CD8-positive, alpha-beta T cell (primary cell): ENCODE measurements at regions of chr3 and their contacts with region 1.

Region 1: GRCh38 chr3:187738331-187739093 is 6.8 kb downstream of the BCL6 start:
- DNase-seq: peak; percentile 38 to 88 (median 65)
- ATAC-seq: peak; percentile 32
- H3K4me3 ChIP-seq: peak overlapping the region; percentile 88 to 94
- H3K4me3 Mint-ChIP-seq: peak overlapping the region; percentile 94
- H3K27ac ChIP-seq: peak overlapping the region; percentile 44 to 88
- H3K27ac Mint-ChIP-seq: peak overlapping the region; percentile 100
- H3K4me1 ChIP-seq: peaks cover 15% of the 10 kb centered on the region
- H3K4me1 Mint-ChIP-seq: peaks cover 52% of the 10 kb centered on the region
- H3K27me3 ChIP-seq: no peaks in the 10 kb centered on the region
- H3K27me3 Mint-ChIP-seq: no peaks in the 10 kb centered on the region
- CTCF ChIP-seq: peak; percentile 85

Region 2: DNA sequence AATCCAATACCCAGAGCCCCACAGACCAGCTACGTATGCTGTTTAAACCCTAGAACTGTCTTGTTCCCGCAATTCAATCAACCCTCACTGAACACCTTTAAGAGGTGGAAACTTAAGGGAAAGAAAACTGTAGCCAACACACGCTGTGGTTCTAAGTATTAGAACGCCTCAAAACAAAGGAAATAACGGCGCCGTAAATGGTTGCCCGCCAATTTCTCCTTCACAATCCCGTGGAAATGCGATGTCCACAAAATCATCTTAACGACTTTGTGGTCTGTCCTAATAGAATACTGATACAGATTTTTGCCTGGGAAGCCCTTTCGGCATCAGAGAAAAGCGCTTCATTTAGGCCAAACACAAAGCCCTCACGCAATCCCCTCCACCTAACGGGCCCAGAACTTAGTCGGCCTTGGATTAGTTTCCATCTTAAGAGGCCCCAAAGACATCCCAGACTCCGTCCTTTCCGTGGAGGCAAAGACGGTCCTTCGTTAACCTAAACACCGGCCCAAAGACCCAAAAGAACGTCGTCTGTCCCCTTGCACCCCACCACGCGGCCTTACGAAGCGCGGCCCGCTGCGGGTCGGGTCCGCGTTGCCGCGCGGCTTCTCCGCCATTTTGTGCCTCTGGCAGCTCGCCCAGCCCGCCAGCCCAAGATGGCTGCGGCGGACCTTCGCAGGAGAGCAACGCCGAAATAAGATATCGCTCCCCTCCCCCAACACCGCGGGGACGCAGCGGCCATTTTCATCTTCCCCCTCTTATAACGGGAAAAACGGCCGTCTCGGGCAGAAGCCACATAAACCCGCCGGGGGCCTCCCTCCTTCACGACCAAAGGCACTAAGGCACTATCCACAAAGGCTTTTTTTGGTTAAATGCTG is 1801.5 kb before region 1 on chr3:
- CTCF ChIA-PET with region 1: no interaction called
- POLR2A ChIA-PET with region 1: no interaction called
- intact Hi-C with region 1: no loop called
- DNase-seq: peak; percentile 69 to 93 (median 87)
- ATAC-seq: peak; percentile 59
- H3K4me3 ChIP-seq: peak overlapping the region; percentile 93
- H3K4me3 Mint-ChIP-seq: peak overlapping the region; percentile 100
- H3K27ac ChIP-seq: peak overlapping the region; percentile 97 to 98
- H3K27ac Mint-ChIP-seq: peak overlapping the region; percentile 100
- H3K4me1 ChIP-seq: peaks cover 19% of the 10 kb centered on the region
- H3K4me1 Mint-ChIP-seq: peaks cover 45% of the 10 kb centered on the region
- H3K27me3 ChIP-seq: no peaks in the 10 kb centered on the region
- H3K27me3 Mint-ChIP-seq: no peaks in the 10 kb centered on the region
- CTCF ChIP-seq: no peak

Region 3: GRCh38 chr3:188154014-188154808 is 415.7 kb after region 1 on chr3 and contains the start of gene LPP:
- CTCF ChIA-PET with region 1: interaction called, 15 read pairs
- POLR2A ChIA-PET with region 1: no interaction called
- intact Hi-C with region 1: no loop called
- DNase-seq: peak; percentile 60 to 93 (median 79)
- ATAC-seq: peak; percentile 84
- H3K4me3 ChIP-seq: peak within 1 kb of the TSS; percentile 72 to 81
- H3K4me3 Mint-ChIP-seq: peak within 1 kb of the TSS; percentile 88
- H3K27ac ChIP-seq: peak within 1 kb of the TSS; percentile 64 to 79
- H3K27ac Mint-ChIP-seq: peak within 1 kb of the TSS; percentile 90
- H3K4me1 ChIP-seq: peaks cover 27% of the 10 kb centered on the region
- H3K4me1 Mint-ChIP-seq: peaks cover 52% of the 10 kb centered on the region
- H3K27me3 ChIP-seq: no peaks in the 10 kb centered on the region
- H3K27me3 Mint-ChIP-seq: no peaks in the 10 kb centered on the region
- CTCF ChIP-seq: no peak
- total RNA-seq, gene LPP: 35.2 to 37.0 TPM

Region 4: DNA sequence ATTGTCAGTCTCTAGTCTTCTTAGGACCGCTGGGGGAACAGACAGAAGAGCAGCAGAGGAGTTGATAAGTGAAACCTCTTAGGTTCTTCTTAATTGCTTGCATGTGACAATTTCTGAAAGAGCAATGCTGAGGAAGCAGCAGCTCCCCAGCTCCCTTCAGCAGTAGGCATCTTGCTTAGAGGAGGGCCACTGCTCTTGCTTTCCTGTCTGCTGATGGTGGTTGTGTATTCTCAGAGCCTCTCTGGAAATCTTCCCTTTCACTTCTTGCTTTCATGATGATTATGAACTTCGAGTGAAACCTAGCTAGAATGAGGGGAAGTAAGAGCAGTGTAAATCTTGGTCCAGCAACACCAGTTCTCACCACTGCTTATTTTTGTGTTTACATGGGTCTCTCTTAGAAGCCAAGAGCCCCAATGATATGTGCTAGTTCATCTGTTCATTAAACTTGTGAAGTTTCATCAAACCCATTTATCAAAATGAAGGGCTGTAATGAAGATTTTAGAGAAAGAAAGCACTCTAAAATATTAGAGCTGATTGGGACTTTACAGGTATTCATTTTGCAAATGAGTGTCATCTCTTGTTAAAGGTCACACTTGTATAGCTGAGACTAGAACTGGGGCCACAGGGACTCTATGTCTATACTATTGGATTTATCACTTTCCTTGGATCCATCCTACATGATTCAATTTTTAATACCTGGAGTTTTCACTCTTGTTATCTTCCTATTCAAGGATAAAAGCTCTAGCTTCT is 662.2 kb after region 1 on chr3:
- CTCF ChIA-PET with region 1: interaction called, 7 read pairs
- POLR2A ChIA-PET with region 1: interaction called, 3 read pairs
- intact Hi-C with region 1: loop called in 1 of 2 experiments (anchors 5 kb)
- DNase-seq: peak in 2 of 9 experiments; percentile 9 to 32
- ATAC-seq: peak; percentile 42
- H3K4me3 ChIP-seq: no peak overlapping the region
- H3K4me3 Mint-ChIP-seq: no peak overlapping the region
- H3K27ac ChIP-seq: peak overlapping the region in 1 of 2 experiments; percentile 37
- H3K27ac Mint-ChIP-seq: peak overlapping the region; percentile 33
- H3K4me1 ChIP-seq: peaks cover 9% of the 10 kb centered on the region
- H3K4me1 Mint-ChIP-seq: peaks cover 50% of the 10 kb centered on the region
- H3K27me3 ChIP-seq: no peaks in the 10 kb centered on the region
- H3K27me3 Mint-ChIP-seq: no peaks in the 10 kb centered on the region
- CTCF ChIP-seq: no peak

Region 5: DNA sequence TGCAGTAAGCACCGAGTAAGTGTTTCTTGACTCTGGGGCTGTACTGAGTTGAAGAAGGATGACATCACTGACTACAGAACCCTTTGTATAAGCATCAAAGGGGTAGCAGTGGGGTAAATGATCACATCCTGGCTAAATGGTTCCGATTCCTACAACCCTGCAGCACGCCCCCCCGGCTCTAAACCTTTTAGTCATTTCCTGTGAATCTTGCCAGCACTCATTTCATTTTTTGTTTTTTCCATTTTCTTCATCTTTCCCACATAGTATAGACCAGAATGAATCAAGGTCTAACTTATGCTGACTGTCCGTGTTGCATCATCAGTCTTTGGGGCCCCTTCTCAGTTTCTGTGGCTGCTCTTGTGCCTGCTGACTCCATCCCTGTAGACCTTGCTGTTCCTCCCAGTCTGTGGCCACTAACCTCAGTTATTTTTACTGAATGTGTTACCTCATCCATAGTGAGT is 1050.1 kb after region 1 on chr3:
- CTCF ChIA-PET with region 1: interaction called, 3 read pairs
- POLR2A ChIA-PET with region 1: no interaction called
- intact Hi-C with region 1: loop called in 1 of 2 experiments (anchors 5 kb)
- DNase-seq: peak in 8 of 9 experiments; percentile 5 to 78 (median 46)
- ATAC-seq: peak; percentile 94
- H3K4me3 ChIP-seq: no peak overlapping the region
- H3K4me3 Mint-ChIP-seq: no peak overlapping the region
- H3K27ac ChIP-seq: no peak overlapping the region
- H3K27ac Mint-ChIP-seq: no peak overlapping the region
- H3K4me1 ChIP-seq: peaks cover 10% of the 10 kb centered on the region
- H3K4me1 Mint-ChIP-seq: no peaks in the 10 kb centered on the region
- H3K27me3 ChIP-seq: no peaks in the 10 kb centered on the region
- H3K27me3 Mint-ChIP-seq: no peaks in the 10 kb centered on the region
- CTCF ChIP-seq: no peak

Region 6: DNA sequence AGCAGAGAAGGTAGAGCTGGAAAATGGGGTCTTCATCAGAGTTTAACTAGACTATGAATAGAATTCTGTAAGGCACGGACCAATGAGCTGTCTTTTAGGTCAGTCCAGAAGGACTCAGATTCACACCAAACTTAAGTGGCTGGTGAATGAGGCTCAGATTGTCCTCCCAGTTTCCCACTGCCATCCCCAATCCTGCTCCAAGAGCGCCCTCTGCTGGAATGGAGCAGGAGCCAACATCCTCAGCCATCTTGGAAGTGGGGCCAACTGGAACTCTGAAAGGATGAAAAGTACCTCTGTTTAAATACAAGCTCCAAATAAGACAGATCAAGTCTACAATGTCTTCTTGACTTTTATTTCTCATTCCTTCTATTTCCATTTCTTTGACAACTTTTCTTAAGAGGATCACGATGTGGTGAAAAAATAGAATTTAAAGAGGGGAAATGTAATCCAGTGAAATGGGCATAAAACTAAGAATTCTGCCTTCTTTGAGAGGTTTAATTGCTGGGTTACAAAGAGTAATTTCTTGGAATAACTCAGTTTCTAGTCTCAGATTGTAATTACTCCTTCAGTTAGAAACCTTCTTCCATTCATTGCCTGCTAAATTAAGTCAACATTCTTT is 1216.2 kb after region 1 on chr3:
- CTCF ChIA-PET with region 1: interaction called, 425 read pairs
- POLR2A ChIA-PET with region 1: interaction called, 30 read pairs
- intact Hi-C with region 1: loop called (anchors 1 kb)
- DNase-seq: peak; percentile 47 to 84 (median 71)
- ATAC-seq: peak; percentile 57
- H3K4me3 ChIP-seq: no peak overlapping the region
- H3K4me3 Mint-ChIP-seq: no peak overlapping the region
- H3K27ac ChIP-seq: no peak overlapping the region
- H3K27ac Mint-ChIP-seq: no peak overlapping the region
- H3K4me1 ChIP-seq: no peaks in the 10 kb centered on the region
- H3K4me1 Mint-ChIP-seq: peaks cover 5% of the 10 kb centered on the region
- H3K27me3 ChIP-seq: no peaks in the 10 kb centered on the region
- H3K27me3 Mint-ChIP-seq: no peaks in the 10 kb centered on the region
- CTCF ChIP-seq: peak; percentile 64

Region 7: GRCh38 chr3:189148081-189148507 is 1409.6 kb after region 1 on chr3:
- CTCF ChIA-PET with region 1: interaction called, 177 read pairs
- POLR2A ChIA-PET with region 1: interaction called, 10 read pairs
- intact Hi-C with region 1: loop called (anchors 1 kb)
- DNase-seq: peak; percentile 44 to 82 (median 71)
- ATAC-seq: peak; percentile 74
- H3K4me3 ChIP-seq: no peak overlapping the region
- H3K4me3 Mint-ChIP-seq: no peak overlapping the region
- H3K27ac ChIP-seq: no peak overlapping the region
- H3K27ac Mint-ChIP-seq: no peak overlapping the region
- H3K4me1 ChIP-seq: peaks cover 14% of the 10 kb centered on the region
- H3K4me1 Mint-ChIP-seq: peaks cover 17% of the 10 kb centered on the region
- H3K27me3 ChIP-seq: no peaks in the 10 kb centered on the region
- H3K27me3 Mint-ChIP-seq: no peaks in the 10 kb centered on the region
- CTCF ChIP-seq: peak; percentile 74